ENCODE measurements at regions of chr6 and their contacts with region 1.

Region 1: GRCh38 chr6:44246663-44247337 is at the start of gene HSP90AB1:
- DNase-seq: peak; percentile 98 to 99 (median 99)
- H3K4me3 ChIP-seq: peak within 1 kb of the TSS; percentile 67 to 100 (median 97)
- H3K27ac ChIP-seq: peak within 1 kb of the TSS; percentile 88 to 96
- H3K4me1 ChIP-seq: peaks cover 13 to 39% (median 31%) of the 10 kb centered on the region in 4 experiments
- H3K27me3 ChIP-seq: no peaks in the 10 kb centered on the region

Region 2: DNA sequence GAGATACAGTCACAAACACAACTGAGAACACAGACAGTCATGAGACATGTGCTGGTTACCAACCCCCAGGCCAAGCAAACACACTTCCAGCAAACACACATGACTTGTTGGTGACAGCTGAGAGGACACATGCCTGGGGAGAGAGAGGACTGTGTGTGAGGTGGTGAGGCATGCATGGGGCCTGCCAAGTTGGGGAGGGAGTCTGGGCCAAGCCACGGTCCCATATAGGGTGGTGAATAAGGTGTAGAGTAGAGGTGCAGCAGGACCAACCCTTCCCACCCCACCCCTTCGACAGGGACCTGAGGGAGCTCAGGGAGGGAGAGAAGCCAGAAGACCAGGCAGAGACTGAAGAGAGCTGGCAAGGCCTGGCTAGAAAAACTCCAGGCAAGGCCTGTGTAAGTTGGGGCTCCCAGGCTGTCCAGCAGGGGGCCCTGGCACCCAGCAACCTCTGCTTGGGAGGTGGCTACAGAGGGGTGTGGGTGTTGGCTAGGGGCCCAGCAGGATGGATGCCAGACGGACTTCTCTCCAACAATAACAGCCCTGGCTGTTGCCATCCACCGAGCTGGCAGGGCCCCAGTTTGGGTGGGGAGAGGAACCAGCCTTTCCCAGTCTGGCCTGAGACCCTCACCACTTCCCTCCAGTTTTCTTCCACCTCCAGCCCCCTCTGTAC is 25.4 kb before region 1 on chr6:
- CTCF ChIA-PET with region 1: interaction called, 6 read pairs
- POLR2A ChIA-PET with region 1: interaction called, 11 read pairs
- DNase-seq: peak; percentile 89 to 93 (median 93)
- H3K4me3 ChIP-seq: peak overlapping the region in 2 of 7 experiments; percentile 11
- H3K27ac ChIP-seq: no peak overlapping the region
- H3K4me1 ChIP-seq: peaks cover 0 to 89% (median 83%) of the 10 kb centered on the region in 4 experiments
- H3K27me3 ChIP-seq: no peaks in the 10 kb centered on the region

Region 3: DNA sequence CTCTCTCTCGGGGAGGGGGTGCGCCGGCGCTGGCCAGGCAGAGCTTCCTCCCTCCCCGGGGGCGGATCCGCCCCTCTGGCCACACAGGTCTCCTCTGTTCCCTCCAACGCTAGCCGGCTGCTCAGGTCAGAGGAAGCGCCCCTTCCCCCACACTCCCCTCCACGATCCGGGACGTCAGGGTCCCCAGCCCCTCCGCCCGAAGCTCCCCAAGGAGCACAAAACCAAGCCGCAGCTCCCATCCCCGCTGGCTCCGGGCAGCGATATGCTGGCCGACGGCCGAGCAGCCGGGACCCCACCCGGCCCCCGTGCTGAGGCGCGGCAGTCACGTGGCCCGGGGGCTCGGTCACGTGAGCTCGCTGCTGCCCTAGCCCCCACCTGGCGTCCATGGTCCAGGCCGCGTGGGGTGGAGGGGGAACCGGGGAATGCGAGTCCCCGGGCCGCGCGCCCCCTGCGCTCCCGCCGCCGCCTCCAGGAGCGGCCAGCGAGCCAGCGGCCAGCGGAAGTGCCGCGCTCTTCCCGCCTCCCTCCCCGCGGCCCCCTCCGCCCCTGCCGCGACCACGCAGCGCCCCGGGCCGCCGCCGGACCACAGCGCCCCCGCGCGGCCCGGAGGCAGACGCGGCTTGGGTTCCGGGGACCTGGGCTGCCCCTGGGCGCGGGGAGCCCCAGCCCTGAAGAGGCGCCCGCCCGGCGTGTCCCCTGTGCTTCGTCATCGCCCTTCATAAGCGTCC is 10.4 kb after region 1 on chr6 and contains the start of gene SLC35B2:
- CTCF ChIA-PET with region 1: interaction called, 17 read pairs
- POLR2A ChIA-PET with region 1: interaction called, 42 read pairs
- DNase-seq: peak; percentile 50 to 77 (median 69)
- H3K4me3 ChIP-seq: peak within 1 kb of the TSS; percentile 63 to 89 (median 83)
- H3K27ac ChIP-seq: peak within 1 kb of the TSS; percentile 46 to 73
- H3K4me1 ChIP-seq: peaks cover 4 to 42% (median 29%) of the 10 kb centered on the region in 4 experiments
- H3K27me3 ChIP-seq: no peaks in the 10 kb centered on the region

Region 4: DNA sequence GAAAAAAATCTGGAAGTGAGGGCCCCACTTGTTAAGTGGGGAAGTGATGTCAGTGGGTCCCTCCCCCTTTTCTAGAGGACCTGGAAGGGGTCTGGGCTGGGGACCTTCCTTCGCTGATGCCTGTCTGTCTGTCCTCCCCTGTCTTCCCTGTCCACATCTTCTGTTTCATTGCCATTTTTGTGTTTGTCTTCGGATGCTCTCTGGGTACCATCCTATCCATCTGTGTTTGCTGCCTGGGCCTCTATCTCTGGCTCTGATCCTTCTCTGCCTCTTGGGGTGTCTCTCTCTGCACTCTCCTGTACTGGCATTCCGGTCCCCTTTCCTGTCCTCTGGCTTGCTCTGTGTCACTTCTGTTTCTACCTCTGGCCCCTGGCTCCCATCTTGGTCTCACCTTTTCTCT is 25.7 kb after region 1 on chr6:
- CTCF ChIA-PET with region 1: no interaction called
- POLR2A ChIA-PET with region 1: no interaction called
- DNase-seq: no peak
- H3K4me3 ChIP-seq: no peak overlapping the region
- H3K27ac ChIP-seq: no peak overlapping the region
- H3K4me1 ChIP-seq: peaks cover 0 to 21% (median 10%) of the 10 kb centered on the region in 4 experiments
- H3K27me3 ChIP-seq: peaks cover 3 to 83% (median 46%) of the 10 kb centered on the region in 5 experiments